Brain microvascular endothelial cell (primary cell): ENCODE measurements at regions of chr2 and their contacts with region 1.

Region 1: GRCh38 chr2:67840460-67841068 is 222.2 kb downstream of the C1D start:
- DNase-seq: peak; percentile 63
- H3K4me3 ChIP-seq: no peak overlapping the region
- H3K27ac ChIP-seq: no peak overlapping the region
- H3K27me3 ChIP-seq: no peaks in the 10 kb centered on the region
- CTCF ChIP-seq: peak; percentile 96

Region 2: GRCh38 chr2:66434679-66435548 is 1405.7 kb before region 1 on chr2 and contains the start of gene MEIS1:
- in situ Hi-C with region 1: loop called (anchors 25 kb)
- DNase-seq: peak; percentile 75
- H3K4me3 ChIP-seq: peak within 1 kb of the TSS; percentile 76
- H3K27ac ChIP-seq: no peak within 1 kb of the TSS
- H3K27me3 ChIP-seq: peaks cover 80% of the 10 kb centered on the region
- CTCF ChIP-seq: no peak

Region 3: DNA sequence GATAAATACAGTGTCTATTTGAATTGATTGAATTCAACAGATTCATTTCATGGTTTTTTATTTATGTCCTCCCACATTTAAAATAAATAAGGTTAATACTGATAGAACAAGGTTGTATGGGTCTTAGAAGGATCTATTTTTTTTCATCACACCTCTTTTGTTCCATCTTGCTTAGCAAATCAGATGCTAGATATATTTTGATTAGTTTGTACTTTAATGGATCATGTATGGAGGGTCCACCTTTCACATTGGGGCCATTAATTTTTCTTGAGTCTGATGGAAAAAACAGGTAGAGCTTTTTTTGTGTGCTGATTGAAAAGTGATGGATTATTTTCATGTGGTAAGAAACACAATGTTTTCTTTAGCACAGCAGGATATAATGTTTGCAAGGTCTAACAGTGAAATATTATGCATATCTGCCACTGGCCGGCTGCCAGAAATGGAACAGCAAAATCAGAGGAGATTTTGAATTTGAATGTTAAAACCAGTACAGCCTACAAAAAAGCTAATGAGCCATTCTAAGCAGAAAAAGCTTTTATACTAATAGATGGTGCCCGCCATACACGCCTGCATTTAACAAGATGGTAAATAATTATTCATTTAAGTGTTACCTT is 631.6 kb before region 1 on chr2:
- in situ Hi-C with region 1: no loop called
- DNase-seq: peak; percentile 19
- H3K4me3 ChIP-seq: no peak overlapping the region
- H3K27ac ChIP-seq: no peak overlapping the region
- H3K27me3 ChIP-seq: no peaks in the 10 kb centered on the region
- CTCF ChIP-seq: no peak